ENCODE measurements at regions of chr10 and their contacts with region 1.

Region 1: DNA sequence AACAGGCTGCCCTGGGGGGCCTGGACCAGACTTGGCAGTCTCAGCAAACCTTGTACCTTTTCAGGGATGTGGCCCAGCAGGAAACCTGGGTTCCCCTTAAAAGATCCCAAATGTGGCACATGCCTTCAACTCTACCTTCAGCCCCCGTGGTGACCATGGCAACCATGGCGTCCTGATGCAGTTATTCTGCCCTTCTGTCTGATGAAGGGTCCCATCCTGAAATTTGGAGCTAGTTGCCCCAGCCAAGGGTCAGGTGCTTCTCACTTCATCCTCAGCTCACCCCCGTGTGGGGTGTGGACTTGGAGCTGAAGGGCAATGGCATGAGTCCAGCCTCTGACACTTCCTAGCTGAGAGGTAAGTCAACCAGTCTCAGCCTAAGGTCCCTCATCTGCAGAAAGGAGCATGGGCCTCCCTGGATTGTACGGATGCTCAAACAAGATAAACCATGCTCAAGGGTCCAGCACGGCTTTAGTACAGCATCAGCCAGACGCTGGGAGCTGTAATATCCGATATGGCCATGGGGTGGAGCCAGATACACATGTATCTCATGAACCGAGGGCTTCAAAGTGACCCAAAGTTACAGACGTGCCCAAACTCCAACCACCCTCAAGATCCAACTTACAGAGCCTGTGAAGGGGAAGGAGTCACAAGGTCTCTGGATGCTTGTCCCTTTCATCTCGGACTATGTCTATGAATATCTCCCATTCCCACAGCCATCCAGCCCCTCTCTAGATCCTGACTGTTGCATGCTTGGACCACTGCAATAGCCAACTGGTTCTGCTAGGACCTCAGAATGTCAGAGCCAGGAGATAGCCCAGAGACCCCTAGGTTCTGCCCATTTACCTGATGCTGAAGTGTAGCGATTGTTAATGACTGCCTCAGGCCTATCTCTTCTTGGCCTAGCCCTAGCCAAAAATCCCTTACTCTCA is 142.5 kb downstream of the SH3PXD2A start:
- DNase-seq: peak; percentile 89
- H3K4me3 ChIP-seq: no peak overlapping the region
- H3K27ac ChIP-seq: no peak overlapping the region
- H3K4me1 ChIP-seq: no peaks in the 10 kb centered on the region
- H3K27me3 ChIP-seq: no peaks in the 10 kb centered on the region
- CTCF ChIP-seq: peak; percentile 90

Region 2: DNA sequence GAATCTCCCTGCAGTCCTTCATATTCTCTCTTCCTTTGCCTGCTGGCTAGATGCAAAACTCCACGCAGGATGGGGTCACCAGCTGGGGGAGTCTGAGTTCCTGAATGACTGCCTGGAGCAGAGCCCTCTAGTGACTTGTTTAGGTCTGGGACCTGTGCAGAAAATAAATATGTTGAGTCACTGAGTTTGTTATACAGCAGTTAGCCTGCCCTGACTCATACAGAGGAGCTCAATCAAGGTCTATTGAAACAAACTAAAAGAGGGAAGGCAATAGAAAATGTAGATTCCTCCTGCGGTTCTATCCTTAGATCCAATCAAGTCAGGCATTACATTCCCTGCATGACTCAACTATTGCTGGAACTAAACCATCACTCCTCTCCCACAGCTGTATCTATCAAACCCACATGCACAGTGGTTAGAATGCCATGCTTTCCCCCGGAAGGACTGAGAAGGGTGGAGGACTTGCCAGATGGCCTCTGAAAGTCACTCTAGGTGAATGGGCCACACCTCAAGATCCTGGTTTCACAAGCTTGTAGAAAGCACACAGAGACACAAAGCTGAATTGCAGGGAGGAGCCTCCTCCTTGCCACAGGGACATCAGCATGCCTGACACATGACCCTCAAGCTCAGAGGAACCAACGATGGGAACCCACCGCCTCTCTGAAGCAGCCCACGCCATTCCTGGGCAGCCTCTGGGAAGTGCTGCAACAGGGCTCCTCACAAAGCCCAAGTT is 68.7 kb after region 1 on chr10:
- intact Hi-C with region 1: loop called (anchors 5 kb)
- DNase-seq: peak; percentile 82
- H3K4me3 ChIP-seq: no peak overlapping the region
- H3K27ac ChIP-seq: peak overlapping the region; percentile 62
- H3K4me1 ChIP-seq: peaks cover 20% of the 10 kb centered on the region
- H3K27me3 ChIP-seq: no peaks in the 10 kb centered on the region
- CTCF ChIP-seq: peak; percentile 31

Region 3: GRCh38 chr10:103859161-103860086 is 146.6 kb after region 1 on chr10:
- intact Hi-C with region 1: loop called (anchors 2 kb)
- DNase-seq: peak; percentile 84
- H3K4me3 ChIP-seq: no peak overlapping the region
- H3K27ac ChIP-seq: no peak overlapping the region
- H3K4me1 ChIP-seq: no peaks in the 10 kb centered on the region
- H3K27me3 ChIP-seq: no peaks in the 10 kb centered on the region
- CTCF ChIP-seq: peak; percentile 60

Region 4: DNA sequence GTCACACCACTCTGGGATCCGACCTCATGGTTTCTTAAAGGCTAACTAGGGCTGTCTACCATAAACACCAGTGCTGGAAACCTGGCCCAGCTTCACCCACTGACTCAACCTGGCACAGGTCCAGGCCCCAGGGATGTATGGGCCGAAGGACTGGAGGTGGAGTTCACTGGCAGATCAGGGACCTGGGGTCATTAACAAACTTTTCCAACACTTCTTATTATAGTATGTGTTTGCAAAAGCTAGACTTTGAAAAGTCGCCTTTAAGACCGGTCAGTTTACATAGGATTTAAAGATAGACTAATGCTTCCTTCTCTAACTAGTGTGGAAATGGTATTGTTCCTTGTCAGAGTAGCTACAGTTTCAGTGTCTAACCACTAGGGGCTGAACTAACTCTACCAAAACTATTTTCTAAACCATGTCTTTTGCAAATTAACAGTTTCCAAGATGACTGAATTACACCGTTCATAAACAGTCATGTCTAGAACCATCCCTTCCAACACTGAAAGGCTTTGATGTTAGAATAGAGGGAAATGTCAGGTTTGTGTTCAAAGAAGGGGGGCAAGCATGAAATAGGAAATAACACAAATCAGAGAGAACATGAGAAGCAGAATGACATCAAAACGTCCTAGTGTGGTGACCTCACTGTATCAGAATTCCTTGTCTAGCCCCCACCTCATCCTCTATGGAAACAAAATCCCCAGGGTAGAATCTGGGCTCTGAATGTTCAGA is 175.4 kb after region 1 on chr10:
- intact Hi-C with region 1: loop called (anchors 5 kb)
- DNase-seq: peak; percentile 94
- H3K4me3 ChIP-seq: no peak overlapping the region
- H3K27ac ChIP-seq: peak overlapping the region; percentile 73
- H3K4me1 ChIP-seq: peaks cover 5% of the 10 kb centered on the region
- H3K27me3 ChIP-seq: no peaks in the 10 kb centered on the region
- CTCF ChIP-seq: peak; percentile 73

Region 5: DNA sequence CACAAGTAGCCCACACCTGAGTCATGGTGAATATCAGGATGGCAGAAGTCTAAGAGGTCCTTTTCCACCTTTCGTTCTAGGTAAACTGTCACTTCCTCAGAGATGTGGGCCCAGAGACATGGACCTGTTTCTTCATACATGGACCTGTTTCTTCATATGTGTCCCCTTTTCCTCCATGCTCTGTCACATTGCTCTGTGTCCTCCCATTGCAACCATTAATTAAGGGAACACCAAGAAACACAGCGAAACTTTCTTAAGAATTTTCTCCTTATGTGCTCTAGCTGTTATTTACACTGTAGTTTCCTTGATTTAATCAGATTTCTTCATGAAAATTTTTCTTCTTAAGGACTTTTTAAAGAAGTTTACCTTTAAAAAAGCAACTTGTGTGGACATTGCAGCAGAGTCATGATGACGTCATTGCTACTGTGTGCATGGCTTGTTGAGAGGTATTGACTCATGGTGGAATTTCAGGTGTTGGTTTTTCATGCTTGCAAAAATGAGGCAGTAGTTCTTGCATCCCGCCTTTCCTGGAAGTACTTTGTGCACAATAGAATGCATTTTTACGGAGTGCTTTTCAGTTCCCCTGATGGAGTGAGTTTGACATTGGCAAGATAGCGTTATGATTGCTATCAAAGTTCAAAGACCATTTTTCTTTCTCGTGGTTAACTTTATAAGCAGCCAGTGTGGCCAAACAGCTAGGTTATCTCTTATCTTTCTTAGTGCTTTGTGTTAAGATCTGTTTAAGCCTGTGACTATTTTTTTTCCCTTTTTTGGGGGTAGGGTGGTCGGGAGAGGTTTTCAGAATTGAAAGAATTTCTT is 678.5 kb after region 1 on chr10:
- intact Hi-C with region 1: no loop called
- DNase-seq: no peak
- H3K4me3 ChIP-seq: no peak overlapping the region
- H3K27ac ChIP-seq: no peak overlapping the region
- H3K4me1 ChIP-seq: no peaks in the 10 kb centered on the region
- H3K27me3 ChIP-seq: no peaks in the 10 kb centered on the region
- CTCF ChIP-seq: no peak